Adrenal gland (tissue), 19 donors: ENCODE measurements at regions of chr7 and their contacts with region 1.

Region 1: GRCh38 chr7:24979863-24980533 is at the start of gene OSBPL3:
- DNase-seq: peak; percentile 87 to 95 (median 94)
- H3K4me3 ChIP-seq: peak within 1 kb of the TSS in 3 of 4 donors; percentile 15 to 54 (median 21)
- H3K27ac ChIP-seq: peak within 1 kb of the TSS in 4 of 5 donors; percentile 33 to 86 (median 51)
- H3K4me1 ChIP-seq: peaks cover 7 to 26% of the 10 kb centered on the region in 2 donors
- H3K27me3 ChIP-seq: no peaks in the 10 kb centered on the region
- CTCF ChIP-seq: no peak
- POLR2A ChIP-seq: peak in 1 of 2 donors; percentile 60
- total RNA-seq, gene OSBPL3: 1.1 to 8.4 (median 3.4) TPM

Region 2: GRCh38 chr7:24819916-24820689 is 159.9 kb before region 1 on chr7:
- intact Hi-C with region 1: loop called in 1 of 2 experiments (anchors 10 kb)
- DNase-seq: peak; percentile 73 to 90 (median 86)
- H3K4me3 ChIP-seq: no peak overlapping the region
- H3K27ac ChIP-seq: no peak overlapping the region
- H3K4me1 ChIP-seq: peaks cover 4 to 7% of the 10 kb centered on the region in 2 donors
- H3K27me3 ChIP-seq: no peaks in the 10 kb centered on the region
- CTCF ChIP-seq: peak; percentile 80 to 91 (median 82)
- POLR2A ChIP-seq: no peak